A673 (cell line): ENCODE measurements at regions of chr4 and their contacts with region 1.

Region 1: DNA sequence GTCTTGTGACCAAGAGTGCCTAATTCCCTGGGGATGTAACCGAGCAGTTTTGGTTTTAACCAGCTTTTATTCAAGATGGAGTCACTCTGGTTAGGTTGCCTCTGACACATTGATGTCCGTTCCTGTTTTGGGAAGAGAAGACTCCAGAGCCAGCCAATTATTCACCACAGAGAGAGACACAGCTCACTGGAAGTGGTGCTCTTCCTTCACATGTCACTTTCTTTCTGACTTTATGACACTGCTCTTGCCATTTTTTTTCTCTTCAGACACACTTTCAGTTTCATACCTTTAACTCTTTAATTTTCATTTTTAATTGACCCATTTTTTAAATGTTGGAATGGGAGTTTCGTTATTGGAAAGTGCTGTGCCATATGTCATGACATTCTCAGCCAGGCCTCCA is 418.4 kb upstream of the FSTL5 start:
- DNase-seq: no peak
- H3K4me3 ChIP-seq: no peak overlapping the region
- H3K27ac ChIP-seq: no peak overlapping the region
- H3K4me1 ChIP-seq: no peaks in the 10 kb centered on the region
- H3K27me3 ChIP-seq: no peaks in the 10 kb centered on the region
- CTCF ChIP-seq: no peak

Region 2: GRCh38 chr4:162849937-162850336 is 267.8 kb after region 1 on chr4:
- CTCF ChIA-PET with region 1: no interaction called
- POLR2A ChIA-PET with region 1: no interaction called
- intact Hi-C with region 1: loop called (anchors 10 kb)
- DNase-seq: no peak
- H3K4me3 ChIP-seq: no peak overlapping the region
- H3K27ac ChIP-seq: no peak overlapping the region
- H3K4me1 ChIP-seq: no peaks in the 10 kb centered on the region
- H3K27me3 ChIP-seq: no peaks in the 10 kb centered on the region
- CTCF ChIP-seq: no peak

Region 3: DNA sequence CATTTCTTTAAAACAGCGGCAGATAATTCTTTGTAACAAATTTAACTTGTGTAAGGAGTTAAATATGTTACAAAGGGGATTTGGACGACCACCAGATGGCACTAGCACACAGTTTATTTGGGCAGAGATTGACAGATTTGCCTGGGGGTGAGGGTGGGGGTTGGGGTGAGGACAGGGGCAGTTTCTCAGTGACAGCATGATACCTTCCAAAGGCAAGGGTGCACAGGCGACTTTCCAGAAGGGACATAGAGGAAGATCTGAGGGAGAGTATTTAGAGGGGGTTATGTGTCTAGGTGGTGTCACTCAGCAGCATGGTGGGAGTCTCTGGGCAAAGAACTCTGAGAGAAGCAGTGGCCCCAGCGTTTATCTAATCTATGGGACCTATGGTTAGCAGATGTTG is 902.7 kb after region 1 on chr4:
- CTCF ChIA-PET with region 1: no interaction called
- POLR2A ChIA-PET with region 1: no interaction called
- intact Hi-C with region 1: no loop called
- DNase-seq: peak; percentile 83
- H3K4me3 ChIP-seq: no peak overlapping the region
- H3K27ac ChIP-seq: no peak overlapping the region
- H3K4me1 ChIP-seq: peaks cover 13% of the 10 kb centered on the region
- H3K27me3 ChIP-seq: no peaks in the 10 kb centered on the region
- CTCF ChIP-seq: peak; percentile 85